Colonic mucosa (tissue), 4 donors: ENCODE measurements at regions of chr19 and their contacts with region 1.

Region 1: DNA sequence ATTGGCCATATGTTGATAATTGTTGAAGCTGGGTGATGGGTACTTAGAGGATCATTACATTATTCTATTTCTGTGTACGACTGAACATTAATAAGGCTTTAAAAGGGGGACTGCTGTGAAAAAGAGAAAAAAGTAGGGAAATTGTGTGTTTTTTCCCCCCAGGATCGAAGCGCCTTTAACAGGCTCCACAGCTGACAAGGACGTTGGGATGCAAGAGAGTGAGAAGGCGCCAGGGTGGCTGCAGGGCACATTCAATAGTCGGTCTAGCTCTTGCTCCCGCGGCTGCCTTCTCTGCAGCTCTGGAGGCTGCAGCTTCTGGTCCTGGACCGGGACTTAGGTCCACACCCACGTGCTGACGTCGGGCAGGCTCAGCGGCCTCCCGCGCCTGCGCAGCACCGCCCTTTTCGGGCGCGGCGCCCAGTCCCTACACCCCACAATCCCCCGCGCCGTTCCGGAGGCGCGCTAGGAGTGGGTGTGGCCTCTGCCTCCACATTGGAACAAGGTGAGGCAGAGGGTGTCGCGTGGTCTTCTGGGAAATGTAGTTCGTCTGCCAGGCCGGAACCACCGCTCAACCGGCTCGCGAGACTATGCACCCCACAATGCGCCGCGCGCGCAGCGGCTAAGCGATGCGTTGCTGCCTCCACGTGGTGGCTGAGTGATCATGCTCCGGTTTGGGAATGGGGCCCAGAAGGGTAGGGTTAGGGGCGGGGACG is 4.9 kb upstream of the LRFN3 start:
- DNase-seq: peak; percentile 99
- H3K4me3 ChIP-seq: no peak overlapping the region
- H3K27ac ChIP-seq: peak overlapping the region; percentile 53
- H3K4me1 ChIP-seq: no peaks in the 10 kb centered on the region
- H3K27me3 ChIP-seq: no peaks in the 10 kb centered on the region
- CTCF ChIP-seq: peak; percentile 54

Region 2: DNA sequence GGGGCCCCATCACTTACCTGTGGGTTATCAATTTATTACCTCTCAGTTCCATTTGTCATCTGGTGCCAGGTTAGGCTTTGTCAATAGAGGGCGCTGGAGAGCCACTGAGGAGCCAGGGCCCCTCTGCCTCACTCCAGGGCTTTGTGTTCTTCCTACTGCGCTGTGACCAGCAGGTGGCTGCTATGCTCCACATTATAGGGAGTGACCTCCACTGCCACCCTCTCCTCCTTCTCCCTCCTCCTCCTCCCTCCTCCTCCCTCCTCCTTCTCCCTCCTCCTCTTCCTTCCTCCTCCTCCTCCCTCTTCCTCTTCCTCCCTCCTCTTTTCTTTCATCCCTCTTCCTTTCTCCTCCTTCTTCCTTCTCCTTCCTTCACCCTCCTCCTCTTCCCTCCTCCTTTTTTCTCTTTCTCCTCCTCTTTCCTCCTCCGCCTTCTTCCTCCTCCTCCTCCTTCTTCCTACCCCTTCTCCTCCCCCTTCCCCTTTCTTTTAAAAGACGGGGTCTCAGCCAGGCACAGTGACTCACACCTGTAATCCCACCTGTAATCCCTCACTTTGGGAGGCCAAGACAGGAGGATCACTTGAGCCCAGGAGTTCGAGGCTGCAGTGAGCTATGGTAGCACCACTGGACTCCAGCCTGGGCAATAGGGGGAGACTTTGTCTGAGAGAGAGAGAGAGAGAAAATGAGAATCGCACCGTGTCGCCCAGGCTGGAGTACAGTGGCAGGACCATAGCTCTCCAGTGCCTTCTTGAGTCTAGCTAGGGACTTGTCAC is 237.3 kb before region 1 on chr19:
- intact Hi-C with region 1: loop called (anchors 5 kb)
- DNase-seq: peak; percentile 93
- H3K4me3 ChIP-seq: no peak overlapping the region
- H3K27ac ChIP-seq: no peak overlapping the region
- H3K4me1 ChIP-seq: no peaks in the 10 kb centered on the region
- H3K27me3 ChIP-seq: no peaks in the 10 kb centered on the region
- CTCF ChIP-seq: peak; percentile 91

Region 3: GRCh38 chr19:35740423-35741202 is 190.7 kb before region 1 on chr19:
- intact Hi-C with region 1: loop called (anchors 10 kb)
- DNase-seq: peak; percentile 99
- H3K4me3 ChIP-seq: peak overlapping the region; percentile 66
- H3K27ac ChIP-seq: peak overlapping the region; percentile 90
- H3K4me1 ChIP-seq: peaks cover 9% of the 10 kb centered on the region
- H3K27me3 ChIP-seq: no peaks in the 10 kb centered on the region
- CTCF ChIP-seq: no peak

Region 4: DNA sequence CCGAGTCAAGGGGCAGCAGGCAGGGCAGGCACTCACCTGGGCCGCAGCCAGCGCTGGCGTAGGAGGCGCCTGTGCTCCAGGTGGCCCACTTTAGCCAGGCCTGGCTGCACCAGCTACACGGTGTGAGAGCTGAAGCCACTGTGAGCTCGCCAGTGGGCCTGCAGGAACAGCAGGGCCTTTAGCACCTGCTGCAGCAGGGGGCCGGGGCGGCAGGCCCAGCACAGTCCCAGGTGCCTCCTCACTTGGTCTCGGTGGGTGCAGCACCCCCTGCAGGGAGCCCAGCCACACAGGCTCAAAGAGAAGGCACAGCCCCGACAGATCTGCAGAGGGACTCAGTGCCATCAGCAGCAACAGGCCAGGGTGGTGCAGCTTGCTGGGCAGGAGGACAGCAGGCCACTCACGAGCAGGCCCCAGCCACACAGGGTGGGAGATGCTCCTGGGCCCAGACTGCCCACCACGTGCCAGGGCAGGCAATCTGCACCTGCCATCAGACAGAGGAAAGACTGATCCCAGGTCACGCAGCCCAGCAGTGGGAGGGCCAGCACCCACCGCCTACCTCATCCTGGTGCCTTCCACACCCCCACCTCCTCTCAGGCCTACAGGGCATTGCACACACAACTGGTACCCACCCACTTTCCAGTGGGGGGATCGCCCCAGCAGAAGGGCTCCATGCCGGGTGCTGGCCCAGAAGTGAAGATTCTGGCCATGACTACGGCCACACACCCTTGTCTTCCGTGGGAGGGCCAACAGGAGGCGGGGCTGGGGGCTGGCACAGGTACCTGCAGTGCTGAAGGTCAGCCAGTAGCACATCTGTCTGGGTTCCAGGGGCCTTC is 140.1 kb before region 1 on chr19:
- intact Hi-C with region 1: no loop called
- DNase-seq: no peak
- H3K4me3 ChIP-seq: no peak overlapping the region
- H3K27ac ChIP-seq: no peak overlapping the region
- H3K4me1 ChIP-seq: no peaks in the 10 kb centered on the region
- H3K27me3 ChIP-seq: no peaks in the 10 kb centered on the region
- CTCF ChIP-seq: no peak

Region 5: DNA sequence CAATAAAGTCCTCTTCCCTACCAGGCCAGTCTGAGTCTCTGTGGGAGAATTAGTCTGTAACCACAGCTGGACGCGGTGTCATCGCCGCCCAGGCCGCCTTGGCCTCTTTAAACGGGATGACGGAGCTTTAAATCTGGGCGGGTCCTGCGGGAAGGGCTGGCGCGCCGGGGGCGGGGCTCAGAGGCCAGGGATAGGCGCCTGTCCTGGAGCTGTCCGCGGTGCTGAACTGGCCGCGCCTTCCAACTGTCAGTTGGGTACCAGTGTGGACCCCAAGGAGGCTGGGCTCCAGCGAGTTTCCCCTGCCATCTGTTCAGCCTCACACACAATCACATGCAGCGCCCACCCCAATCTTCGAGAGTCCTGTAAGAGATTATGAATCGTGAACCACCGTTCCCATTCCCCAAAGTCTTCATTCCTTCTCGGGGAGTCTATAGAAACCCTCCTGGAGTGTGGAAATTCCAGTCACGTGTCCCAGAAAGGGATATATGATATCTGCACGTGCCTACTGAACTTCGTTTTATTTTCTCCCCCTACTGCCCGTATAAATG is 51.5 kb before region 1 on chr19:
- intact Hi-C with region 1: loop called (anchors 5 kb)
- DNase-seq: peak; percentile 93
- H3K4me3 ChIP-seq: no peak overlapping the region
- H3K27ac ChIP-seq: no peak overlapping the region
- H3K4me1 ChIP-seq: no peaks in the 10 kb centered on the region
- H3K27me3 ChIP-seq: no peaks in the 10 kb centered on the region
- CTCF ChIP-seq: no peak

Region 6: GRCh38 chr19:35899547-35900214 is 31.6 kb before region 1 on chr19:
- intact Hi-C with region 1: loop called (anchors 5 kb)
- DNase-seq: peak; percentile 87
- H3K4me3 ChIP-seq: peak overlapping the region; percentile 46
- H3K27ac ChIP-seq: peak overlapping the region; percentile 89
- H3K4me1 ChIP-seq: peaks cover 3% of the 10 kb centered on the region
- H3K27me3 ChIP-seq: no peaks in the 10 kb centered on the region
- CTCF ChIP-seq: no peak

Region 7: GRCh38 chr19:36151144-36152018 is 220.1 kb after region 1 on chr19:
- intact Hi-C with region 1: no loop called
- DNase-seq: no peak
- H3K4me3 ChIP-seq: peak overlapping the region; percentile 22
- H3K27ac ChIP-seq: peak overlapping the region; percentile 76
- H3K4me1 ChIP-seq: no peaks in the 10 kb centered on the region
- H3K27me3 ChIP-seq: no peaks in the 10 kb centered on the region
- CTCF ChIP-seq: no peak